ENCODE measurements at regions of chr3 and their contacts with region 1.

Region 1: GRCh38 chr3:25856902-25857518 is 67.1 kb downstream of the OXSM start:
- DNase-seq: no peak
- ATAC-seq: peak in 2 of 8 donors; percentile 39 to 56
- H3K4me3 ChIP-seq: no peak overlapping the region
- H3K27ac ChIP-seq: no peak overlapping the region
- H3K4me1 ChIP-seq: no peaks in the 10 kb centered on the region
- H3K27me3 ChIP-seq: no peaks in the 10 kb centered on the region
- CTCF ChIP-seq: peak; percentile 44 to 83 (median 67)

Region 2: DNA sequence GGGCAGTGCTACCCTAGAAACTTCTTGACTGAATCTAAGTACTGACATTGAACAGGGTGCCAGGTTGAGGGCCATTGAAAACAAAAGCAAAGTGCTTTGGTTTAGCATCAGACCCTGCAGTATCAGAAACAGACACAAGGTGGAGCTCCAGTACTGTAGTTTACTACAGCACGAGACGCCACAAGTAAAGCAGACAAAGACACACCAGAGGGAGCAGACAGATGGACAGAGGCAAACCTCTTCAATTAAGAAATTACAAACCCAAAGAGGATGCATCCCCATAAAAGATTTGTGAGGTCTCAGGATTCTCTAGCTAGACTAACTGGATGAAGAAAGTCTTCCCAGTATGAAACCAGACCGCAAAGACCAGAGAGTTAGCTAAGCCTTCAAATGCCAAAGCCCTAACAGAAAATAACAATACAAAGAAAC is 208.9 kb before region 1 on chr3:
- intact Hi-C with region 1: loop called (anchors 1 to 10 kb)
- DNase-seq: peak in 1 of 2 donors; percentile 72
- ATAC-seq: peak in 7 of 8 donors; percentile 61 to 92 (median 89)
- H3K4me3 ChIP-seq: no peak overlapping the region
- H3K27ac ChIP-seq: no peak overlapping the region
- H3K4me1 ChIP-seq: peaks cover 0 to 41% (median 21%) of the 10 kb centered on the region in 9 donors
- H3K27me3 ChIP-seq: no peaks in the 10 kb centered on the region
- CTCF ChIP-seq: peak; percentile 62 to 93 (median 88)

Region 3: GRCh38 chr3:25655659-25656058 is 201.4 kb before region 1 on chr3:
- intact Hi-C with region 1: loop called in 1 of 10 experiments (anchors 10 kb)
- DNase-seq: no peak
- ATAC-seq: no peak
- H3K4me3 ChIP-seq: no peak overlapping the region
- H3K27ac ChIP-seq: no peak overlapping the region
- H3K4me1 ChIP-seq: peaks cover 0 to 88% (median 76%) of the 10 kb centered on the region in 9 donors
- H3K27me3 ChIP-seq: no peaks in the 10 kb centered on the region
- CTCF ChIP-seq: no peak

Measured in heart right ventricle (tissue), 16 donors.